Heart left ventricle (tissue), 16 donors: ENCODE measurements at regions of chr5 and their contacts with region 1.

Region 1: DNA sequence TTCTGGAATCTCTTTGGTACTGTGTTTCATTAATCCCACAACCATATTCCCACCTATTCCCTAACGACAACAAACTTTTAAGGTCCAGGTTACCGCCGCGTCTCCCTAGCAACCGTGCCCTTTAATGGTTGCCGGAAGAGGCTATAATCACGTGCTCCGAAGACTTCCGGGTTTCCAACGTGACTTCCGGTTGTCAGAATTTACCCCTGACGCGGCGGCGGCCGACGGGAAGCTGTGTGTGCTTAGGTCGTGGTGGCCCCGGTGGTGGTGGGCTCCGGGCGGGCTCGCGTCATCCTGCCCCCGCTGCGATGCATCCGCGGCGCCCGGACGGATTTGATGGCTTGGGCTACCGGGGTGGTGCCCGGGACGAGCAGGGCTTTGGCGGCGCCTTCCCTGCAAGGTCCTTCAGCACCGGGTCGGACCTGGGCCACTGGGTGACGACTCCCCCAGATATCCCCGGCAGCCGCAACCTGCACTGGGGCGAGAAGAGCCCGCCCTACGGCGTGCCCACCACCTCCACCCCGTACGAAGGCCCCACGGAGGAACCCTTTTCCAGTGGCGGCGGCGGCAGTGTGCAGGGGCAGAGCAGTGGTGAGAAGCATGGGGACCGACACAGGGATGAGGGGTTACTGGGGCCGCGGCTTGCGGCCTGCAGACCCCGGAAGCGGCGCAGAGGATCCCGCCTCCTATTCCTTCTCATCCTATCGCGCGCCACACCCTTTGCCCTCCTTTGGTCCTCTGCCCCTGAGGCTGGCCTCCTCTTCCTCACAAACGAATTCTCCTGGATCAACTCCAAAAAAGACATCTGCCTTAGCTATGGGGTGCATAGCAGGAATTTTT is at the start of gene SLC25A46:
- DNase-seq: peak; percentile 86 to 91 (median 89)
- ATAC-seq: peak; percentile 96 to 99 (median 98)
- H3K4me3 ChIP-seq: peak within 1 kb of the TSS; percentile 72 to 94 (median 86)
- H3K27ac ChIP-seq: peak within 1 kb of the TSS; percentile 51 to 96 (median 88)
- H3K4me1 ChIP-seq: peaks cover 0 to 25% (median 14%) of the 10 kb centered on the region in 12 donors
- H3K27me3 ChIP-seq: no peaks in the 10 kb centered on the region
- CTCF ChIP-seq: no peak
- POLR2A ChIP-seq: peak; percentile 6 to 58
- total RNA-seq, gene SLC25A46: 52.2 to 71.5 (median 61.6) TPM

Region 2: GRCh38 chr5:110726249-110727024 is 12.6 kb before region 1 on chr5 and contains the start of gene TMEM232:
- intact Hi-C with region 1: loop called in 1 of 10 experiments (anchors 1 kb)
- DNase-seq: peak; percentile 62 to 77 (median 72)
- ATAC-seq: peak; percentile 95 to 99 (median 98)
- H3K4me3 ChIP-seq: peak within 1 kb of the TSS; percentile 11 to 61 (median 48)
- H3K27ac ChIP-seq: peak within 1 kb of the TSS in 3 of 12 donors; percentile 2 to 52 (median 12)
- H3K4me1 ChIP-seq: no peaks in the 10 kb centered on the region
- H3K27me3 ChIP-seq: no peaks in the 10 kb centered on the region
- CTCF ChIP-seq: no peak
- POLR2A ChIP-seq: no peak
- total RNA-seq, gene TMEM232: 1.9 to 5.6 (median 3.1) TPM in 8 of 9 donors, not detected in the other